GM12878 (cell line): ENCODE measurements at regions of chr7 and their contacts with region 1.

Region 1: GRCh38 chr7:121366852-121367431 is 29.2 kb downstream of the FAM3C start:
- DNase-seq: no peak
- ATAC-seq: peak; percentile 28; the same call in 2 of the 3 replicates
- H3K4me3 ChIP-seq: no peak overlapping the region
- H3K27ac ChIP-seq: no peak overlapping the region
- H3K4me1 ChIP-seq: peaks cover 15% of the 10 kb centered on the region
- H3K27me3 ChIP-seq: no peaks in the 10 kb centered on the region
- CTCF ChIP-seq: peak; percentile 50 to 66 (median 66)
- EP300 ChIP-seq: no peak
- POLR2A ChIP-seq: no peak
- RAD21 ChIP-seq: peak; percentile 86

Region 2: GRCh38 chr7:121099572-121099971 is 267.4 kb before region 1 on chr7:
- CTCF ChIA-PET with region 1: no interaction called
- POLR2A ChIA-PET with region 1: no interaction called
- RAD21 ChIA-PET with region 1: no interaction called
- SMC1A ChIA-PET with region 1: no interaction called
- in situ Hi-C with region 1: no loop called
- intact Hi-C with region 1: no loop called
- DNase-seq: no peak
- ATAC-seq: 0 out of 3 replicates have a peak, but pooled peaks have one; percentile 41
- H3K4me3 ChIP-seq: no peak overlapping the region
- H3K27ac ChIP-seq: no peak overlapping the region
- H3K4me1 ChIP-seq: no peaks in the 10 kb centered on the region
- H3K27me3 ChIP-seq: peaks cover 0 to 2% of the 10 kb centered on the region in 2 experiments; a peak in 1 of 4 replicates
- CTCF ChIP-seq: peak in 1 of 3 experiments; percentile 2; a peak in 1 of 6 replicates
- EP300 ChIP-seq: no peak
- POLR2A ChIP-seq: no peak
- RAD21 ChIP-seq: no peak

Region 3: GRCh38 chr7:121163699-121164098 is 203.2 kb before region 1 on chr7:
- CTCF ChIA-PET with region 1: interaction called, 4 read pairs
- POLR2A ChIA-PET with region 1: no interaction called
- RAD21 ChIA-PET with region 1: interaction called, 6 read pairs
- SMC1A ChIA-PET with region 1: interaction called, 13 read pairs
- in situ Hi-C with region 1: no loop called
- intact Hi-C with region 1: no loop called
- DNase-seq: no peak
- ATAC-seq: peak; percentile 66
- H3K4me3 ChIP-seq: no peak overlapping the region
- H3K27ac ChIP-seq: no peak overlapping the region
- H3K4me1 ChIP-seq: no peaks in the 10 kb centered on the region
- H3K27me3 ChIP-seq: no peaks in the 10 kb centered on the region
- CTCF ChIP-seq: peak in 1 of 3 experiments; percentile 34; a peak in 1 of 6 replicates
- EP300 ChIP-seq: no peak
- POLR2A ChIP-seq: no peak
- RAD21 ChIP-seq: peak; percentile 46; the same call in 1 of the 2 replicates

Region 4: GRCh38 chr7:121379930-121380329 is 13.0 kb after region 1 on chr7:
- CTCF ChIA-PET with region 1: interaction called, 87 read pairs
- POLR2A ChIA-PET with region 1: interaction called, 81 read pairs
- RAD21 ChIA-PET with region 1: interaction called, 272 read pairs
- SMC1A ChIA-PET with region 1: interaction called, 281 read pairs
- in situ Hi-C with region 1: no loop called
- intact Hi-C with region 1: no loop called
- DNase-seq: no peak
- ATAC-seq: no peak
- H3K4me3 ChIP-seq: no peak overlapping the region
- H3K27ac ChIP-seq: no peak overlapping the region
- H3K4me1 ChIP-seq: peaks cover 25% of the 10 kb centered on the region
- H3K27me3 ChIP-seq: no peaks in the 10 kb centered on the region
- CTCF ChIP-seq: no peak
- EP300 ChIP-seq: no peak
- POLR2A ChIP-seq: no peak
- RAD21 ChIP-seq: no peak

Region 5: GRCh38 chr7:121395961-121396757 is 29.2 kb after region 1 on chr7 and contains the start of gene FAM3C:
- CTCF ChIA-PET with region 1: interaction called, 166 read pairs
- POLR2A ChIA-PET with region 1: interaction called, 52 read pairs
- RAD21 ChIA-PET with region 1: interaction called, 272 read pairs
- SMC1A ChIA-PET with region 1: interaction called, 281 read pairs
- in situ Hi-C with region 1: no loop called
- intact Hi-C with region 1: loop called (anchors 1 kb)
- DNase-seq: peak; percentile 53
- ATAC-seq: peak; percentile 86
- H3K4me3 ChIP-seq: peak within 1 kb of the TSS; percentile 69
- H3K27ac ChIP-seq: peak within 1 kb of the TSS; percentile 66
- H3K4me1 ChIP-seq: peaks cover 8% of the 10 kb centered on the region
- H3K27me3 ChIP-seq: no peaks in the 10 kb centered on the region
- CTCF ChIP-seq: peak; percentile 66 to 94 (median 80); a peak in 5 of 6 replicates
- EP300 ChIP-seq: no peak; a peak in 1 of 4 replicates
- POLR2A ChIP-seq: peak; percentile 94
- RAD21 ChIP-seq: peak; percentile 77
- polyA plus RNA-seq, gene FAM3C: 11.0 to 13.6 TPM

Region 6: GRCh38 chr7:121410829-121411596 is 44.1 kb after region 1 on chr7:
- CTCF ChIA-PET with region 1: interaction called, 11 read pairs
- POLR2A ChIA-PET with region 1: no interaction called
- RAD21 ChIA-PET with region 1: interaction called, 3 read pairs
- SMC1A ChIA-PET with region 1: interaction called, 3 read pairs
- in situ Hi-C with region 1: no loop called
- intact Hi-C with region 1: no loop called
- DNase-seq: no peak
- ATAC-seq: peak; percentile 79
- H3K4me3 ChIP-seq: no peak overlapping the region
- H3K27ac ChIP-seq: no peak overlapping the region
- H3K4me1 ChIP-seq: no peaks in the 10 kb centered on the region
- H3K27me3 ChIP-seq: no peaks in the 10 kb centered on the region
- CTCF ChIP-seq: no peak
- EP300 ChIP-seq: no peak
- POLR2A ChIP-seq: no peak
- RAD21 ChIP-seq: no peak

Region 7: GRCh38 chr7:121500360-121501058 is 133.6 kb after region 1 on chr7:
- CTCF ChIA-PET with region 1: interaction called, 11 read pairs
- POLR2A ChIA-PET with region 1: no interaction called
- RAD21 ChIA-PET with region 1: interaction called, 3 read pairs
- SMC1A ChIA-PET with region 1: interaction called, 5 read pairs
- in situ Hi-C with region 1: no loop called
- intact Hi-C with region 1: no loop called
- DNase-seq: no peak
- ATAC-seq: peak; percentile 79
- H3K4me3 ChIP-seq: no peak overlapping the region
- H3K27ac ChIP-seq: no peak overlapping the region
- H3K4me1 ChIP-seq: no peaks in the 10 kb centered on the region
- H3K27me3 ChIP-seq: no peaks in the 10 kb centered on the region
- CTCF ChIP-seq: no peak
- EP300 ChIP-seq: no peak
- POLR2A ChIP-seq: no peak
- RAD21 ChIP-seq: no peak

Region 8: DNA sequence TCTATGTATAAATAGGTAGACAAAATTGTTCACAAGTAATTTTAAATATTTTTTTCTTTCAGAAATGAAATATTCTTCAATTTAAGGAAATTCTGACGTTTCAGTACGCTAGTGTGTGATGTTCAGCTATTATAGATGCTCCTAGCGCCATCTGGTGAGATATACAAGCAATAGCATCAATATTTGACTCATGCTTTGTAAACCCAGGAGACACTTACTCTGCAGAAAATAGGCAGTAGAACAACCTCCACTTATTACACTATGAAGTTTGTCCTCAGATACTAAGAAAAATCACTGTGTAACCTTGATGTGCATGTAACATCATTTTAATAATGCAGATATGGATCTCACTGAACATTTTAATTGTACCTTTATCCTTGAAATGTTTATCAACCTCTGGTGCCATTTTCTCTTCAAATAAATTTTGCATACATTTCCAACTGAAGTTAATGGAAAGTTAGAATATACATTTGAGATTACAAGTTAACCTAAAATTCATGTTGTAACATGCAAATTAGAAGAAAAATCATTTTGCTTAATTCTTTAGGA is 180.7 kb after region 1 on chr7:
- CTCF ChIA-PET with region 1: interaction called, 181 read pairs
- POLR2A ChIA-PET with region 1: interaction called, 6 read pairs
- RAD21 ChIA-PET with region 1: interaction called, 119 read pairs
- SMC1A ChIA-PET with region 1: interaction called, 163 read pairs
- in situ Hi-C with region 1: loop called (anchors 5 kb)
- intact Hi-C with region 1: loop called (anchors 1 kb)
- DNase-seq: no peak
- ATAC-seq: peak; percentile 89
- H3K4me3 ChIP-seq: no peak overlapping the region
- H3K27ac ChIP-seq: no peak overlapping the region
- H3K4me1 ChIP-seq: no peaks in the 10 kb centered on the region
- H3K27me3 ChIP-seq: no peaks in the 10 kb centered on the region
- CTCF ChIP-seq: peak; percentile 60 to 85 (median 64); a peak in 5 of 6 replicates
- EP300 ChIP-seq: no peak
- POLR2A ChIP-seq: no peak
- RAD21 ChIP-seq: peak; percentile 98